GM12878 (cell line): ENCODE measurements at regions of chr16 and their contacts with region 1.

Region 1: DNA sequence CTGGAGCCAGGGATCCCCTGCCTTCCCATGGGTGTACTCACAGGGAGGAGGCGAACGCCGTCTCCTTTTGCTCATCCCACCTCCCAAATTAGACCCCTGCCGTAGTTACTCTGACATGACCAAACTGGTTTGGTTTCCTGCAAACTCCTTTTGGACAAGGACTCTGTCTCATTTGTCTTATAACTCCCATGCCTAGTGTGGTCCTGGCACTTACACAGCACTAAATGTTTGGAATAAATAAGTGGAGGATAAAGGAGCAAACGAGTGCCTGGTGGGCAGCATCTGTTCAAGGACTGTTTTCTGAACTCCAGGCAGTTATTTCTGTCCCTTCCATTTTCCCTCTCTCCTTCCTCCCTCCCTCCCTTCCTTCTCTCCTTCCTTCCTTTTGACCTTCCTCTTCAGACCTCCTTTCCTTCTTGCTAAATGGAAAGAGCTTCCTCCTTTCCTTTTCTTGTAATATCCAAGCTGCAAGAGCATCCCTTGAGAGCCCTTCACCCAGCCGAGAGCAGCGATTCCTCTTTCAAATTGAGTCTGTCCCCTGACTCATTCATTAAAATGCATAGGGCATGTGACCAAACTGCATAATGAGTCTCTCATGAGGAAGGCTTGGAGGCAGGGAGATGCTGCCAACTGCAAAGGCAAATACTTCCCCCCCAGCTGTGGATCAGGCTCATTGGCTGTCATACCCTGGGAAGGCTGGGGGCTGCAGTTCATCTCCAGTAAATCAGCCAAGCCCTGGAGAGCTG is 36.8 kb downstream of the CHD9 start:
- DNase-seq: peak; percentile 72
- ATAC-seq: peak; percentile 76
- H3K4me3 ChIP-seq: peak overlapping the region; percentile 55; the same call in 1 of the 2 replicates
- H3K27ac ChIP-seq: peak overlapping the region; percentile 96
- H3K4me1 ChIP-seq: peaks cover 44% of the 10 kb centered on the region
- H3K27me3 ChIP-seq: no peaks in the 10 kb centered on the region
- CTCF ChIP-seq: no peak
- EP300 ChIP-seq: peak in 1 of 2 experiments; percentile 80; a peak in 2 of 4 replicates
- POLR2A ChIP-seq: no peak
- RAD21 ChIP-seq: 0 out of 2 replicates have a peak, but pooled peaks have one; percentile 13

Region 2: DNA sequence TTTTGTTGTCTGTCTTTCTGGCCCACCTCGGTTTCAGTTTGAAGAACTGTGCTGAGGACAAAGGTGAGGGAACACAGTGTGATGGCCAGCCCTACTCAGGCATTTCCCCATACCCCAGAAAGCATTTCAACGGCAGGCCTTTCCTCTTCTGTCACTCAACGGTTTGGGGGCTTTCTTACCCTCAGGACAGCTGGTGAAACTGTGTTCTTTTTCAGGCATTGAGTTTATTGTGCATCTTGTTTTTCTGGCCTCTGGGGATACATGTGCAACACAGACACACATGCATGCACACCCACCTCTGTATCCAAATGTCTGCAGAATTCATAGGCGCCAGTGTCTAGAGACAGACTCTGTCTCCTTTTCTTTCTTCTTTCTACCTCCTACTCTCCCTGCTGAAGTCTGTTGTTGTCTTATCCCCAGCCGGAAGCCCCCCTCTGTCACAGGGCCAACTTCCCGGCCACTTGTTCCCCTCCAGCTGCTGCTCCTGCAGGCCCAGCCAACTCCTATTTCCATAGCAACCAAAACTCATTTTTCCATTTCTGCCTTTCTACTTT is 19.8 kb before region 1 on chr16:
- CTCF ChIA-PET with region 1: interaction called, 8 read pairs
- POLR2A ChIA-PET with region 1: interaction called, 66 read pairs
- RAD21 ChIA-PET with region 1: interaction called, 97 read pairs
- SMC1A ChIA-PET with region 1: interaction called, 270 read pairs
- in situ Hi-C with region 1: no loop called
- intact Hi-C with region 1: no loop called
- DNase-seq: no peak
- ATAC-seq: peak; percentile 80
- H3K4me3 ChIP-seq: peak overlapping the region; percentile 52
- H3K27ac ChIP-seq: peak overlapping the region; percentile 78
- H3K4me1 ChIP-seq: peaks cover 55% of the 10 kb centered on the region
- H3K27me3 ChIP-seq: no peaks in the 10 kb centered on the region
- CTCF ChIP-seq: no peak
- EP300 ChIP-seq: peak; percentile 37 to 47; a peak in 2 of 4 replicates
- POLR2A ChIP-seq: no peak
- RAD21 ChIP-seq: no peak; the same call in 1 of the 2 replicates

Region 3: GRCh38 chr16:53080345-53081031 is 11.2 kb before region 1 on chr16:
- CTCF ChIA-PET with region 1: no interaction called
- POLR2A ChIA-PET with region 1: interaction called, 12 read pairs
- RAD21 ChIA-PET with region 1: interaction called, 15 read pairs
- SMC1A ChIA-PET with region 1: interaction called, 12 read pairs
- in situ Hi-C with region 1: no loop called
- intact Hi-C with region 1: no loop called
- DNase-seq: no peak
- ATAC-seq: no peak
- H3K4me3 ChIP-seq: no peak overlapping the region
- H3K27ac ChIP-seq: no peak overlapping the region
- H3K4me1 ChIP-seq: peaks cover 4% of the 10 kb centered on the region; the same call in 1 of the 2 replicates
- H3K27me3 ChIP-seq: no peaks in the 10 kb centered on the region
- CTCF ChIP-seq: no peak
- EP300 ChIP-seq: no peak
- POLR2A ChIP-seq: no peak
- RAD21 ChIP-seq: no peak

Region 4: DNA sequence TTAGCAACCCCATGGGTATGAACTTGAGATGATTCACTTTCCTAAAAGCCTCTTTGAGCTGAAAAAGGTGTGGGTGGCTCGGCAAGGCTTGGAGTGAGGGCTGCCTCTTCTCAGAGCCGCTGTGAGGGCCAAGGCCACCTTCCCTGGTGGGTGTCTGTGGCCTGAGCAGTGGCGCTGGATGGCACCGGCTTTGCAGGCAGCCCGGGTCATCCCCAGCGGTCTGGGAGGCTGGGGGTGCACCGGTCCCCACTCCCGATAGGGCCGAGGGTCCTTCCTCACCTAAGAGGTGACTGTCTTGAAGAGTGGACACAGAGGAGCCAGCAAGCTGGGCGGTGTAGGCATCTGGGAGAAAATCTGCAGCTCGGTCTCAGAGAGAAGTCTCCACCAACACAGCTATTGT is 263.4 kb after region 1 on chr16:
- CTCF ChIA-PET with region 1: no interaction called
- POLR2A ChIA-PET with region 1: no interaction called
- RAD21 ChIA-PET with region 1: no interaction called
- SMC1A ChIA-PET with region 1: no interaction called
- in situ Hi-C with region 1: no loop called
- intact Hi-C with region 1: no loop called
- DNase-seq: no peak
- ATAC-seq: no peak
- H3K4me3 ChIP-seq: no peak overlapping the region
- H3K27ac ChIP-seq: no peak overlapping the region
- H3K4me1 ChIP-seq: no peaks in the 10 kb centered on the region
- H3K27me3 ChIP-seq: no peaks in the 10 kb centered on the region
- CTCF ChIP-seq: no peak
- EP300 ChIP-seq: no peak
- POLR2A ChIP-seq: no peak
- RAD21 ChIP-seq: no peak